Activated T-helper 2 cell treated with anti-CD3 and anti-CD28 coated beads, Interferon-gamma antibody, Interleukin-2, Interleukin-4, amounts not matched to agents 10 μg/mL and 5 μg/mL and 100 μg/mL, durations not matched to agents 14 hours and 24 hours and 36 hours (primary cell): ENCODE measurements at regions of chr7 and their contacts with region 1.

Region 1: GRCh38 chr7:28062197-28062991 is 118.2 kb downstream of the JAZF1 start:
- DNase-seq: peak; percentile 22
- H3K4me3 Mint-ChIP-seq: no peak overlapping the region
- H3K27ac Mint-ChIP-seq: no peak overlapping the region
- H3K4me1 Mint-ChIP-seq: no peaks in the 10 kb centered on the region
- H3K27me3 Mint-ChIP-seq: peaks cover 34% of the 10 kb centered on the region

Region 2: DNA sequence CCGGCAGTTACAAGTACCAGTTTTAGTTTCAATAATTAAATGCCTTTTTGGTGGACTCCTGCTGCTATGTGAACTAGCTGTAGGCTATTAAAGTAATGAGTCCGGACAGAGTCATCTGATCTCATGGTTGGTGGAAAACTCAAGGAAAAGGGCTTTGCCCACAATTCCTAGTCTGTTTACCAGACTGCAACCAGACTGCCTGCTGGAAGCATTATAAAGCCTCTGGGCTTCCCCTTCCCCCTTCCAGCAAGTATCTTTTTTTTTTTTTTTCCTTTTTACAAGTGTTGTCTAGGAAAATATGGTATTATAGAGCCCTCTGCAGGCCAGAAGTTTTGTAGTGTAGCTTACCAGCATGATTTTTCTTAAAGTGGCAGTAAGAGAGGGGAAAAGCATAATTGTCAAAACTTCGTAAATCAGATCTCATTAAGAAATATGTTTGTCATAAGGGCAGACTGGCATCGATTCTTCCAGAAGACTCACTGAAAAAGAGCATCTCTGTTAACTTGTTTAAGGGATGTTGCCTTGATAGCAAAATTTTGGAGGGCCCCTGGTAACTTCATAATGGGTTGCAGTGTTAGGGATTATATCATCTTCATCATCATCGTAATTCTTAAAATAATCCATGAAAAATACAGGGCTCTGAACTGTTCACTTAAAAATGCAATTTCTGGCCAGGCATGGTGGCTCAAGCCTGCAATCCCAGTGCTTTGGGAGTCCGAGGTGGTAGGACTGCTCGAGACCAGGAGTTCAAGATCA is 141.1 kb before region 1 on chr7:
- intact Hi-C with region 1: no loop called
- DNase-seq: no peak
- H3K4me3 Mint-ChIP-seq: no peak overlapping the region
- H3K27ac Mint-ChIP-seq: no peak overlapping the region
- H3K4me1 Mint-ChIP-seq: no peaks in the 10 kb centered on the region
- H3K27me3 Mint-ChIP-seq: peaks cover 7% of the 10 kb centered on the region

Region 3: DNA sequence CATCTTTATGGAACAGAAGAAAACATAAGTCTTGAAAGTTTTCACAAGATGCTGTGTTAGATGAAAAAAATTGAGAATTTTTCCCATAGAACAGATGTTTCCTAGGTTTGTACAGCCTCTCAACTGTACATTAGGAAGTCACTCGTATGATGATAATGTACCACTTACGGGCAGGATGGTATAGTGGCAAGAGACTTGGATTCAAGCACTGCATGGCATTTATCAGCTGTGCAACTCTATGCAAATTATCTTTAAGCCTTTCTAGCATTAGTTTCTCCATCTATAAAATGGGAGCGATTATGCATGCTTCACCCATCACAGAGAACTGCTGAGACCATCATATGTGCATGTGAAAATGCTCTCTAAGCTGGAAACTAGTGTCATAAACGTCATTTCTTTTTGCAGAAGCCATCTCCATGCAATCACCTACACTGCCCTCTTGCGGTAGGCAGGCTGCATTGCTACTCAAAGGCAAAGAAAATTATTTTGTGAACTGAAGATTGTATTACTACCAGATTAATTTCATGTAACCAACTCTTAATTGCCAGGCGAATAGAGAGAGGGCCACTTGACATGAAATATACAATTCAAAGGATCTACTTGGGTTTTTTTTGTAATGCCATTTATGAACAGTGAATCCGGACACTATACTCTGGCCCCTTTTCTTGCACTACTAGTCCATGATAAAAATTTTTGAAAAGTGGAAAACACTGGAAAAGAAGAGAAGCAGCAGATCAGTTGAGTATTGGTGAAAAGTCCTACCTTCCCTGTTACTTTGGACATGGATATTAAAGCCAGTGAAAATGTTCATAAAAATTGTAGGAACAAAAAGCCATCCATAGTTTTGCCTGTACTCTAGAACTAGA is 15.9 kb after region 1 on chr7:
- intact Hi-C with region 1: loop called (anchors 2 kb)
- DNase-seq: peak; percentile 15
- H3K4me3 Mint-ChIP-seq: no peak overlapping the region
- H3K27ac Mint-ChIP-seq: no peak overlapping the region
- H3K4me1 Mint-ChIP-seq: no peaks in the 10 kb centered on the region
- H3K27me3 Mint-ChIP-seq: peaks cover 28% of the 10 kb centered on the region

Region 4: GRCh38 chr7:28123752-28124151 is 61.4 kb after region 1 on chr7:
- intact Hi-C with region 1: no loop called
- DNase-seq: no peak
- H3K4me3 Mint-ChIP-seq: no peak overlapping the region
- H3K27ac Mint-ChIP-seq: no peak overlapping the region
- H3K4me1 Mint-ChIP-seq: peaks cover 2% of the 10 kb centered on the region
- H3K27me3 Mint-ChIP-seq: no peaks in the 10 kb centered on the region